ENCODE measurements at regions of chr18 and their contacts with region 1.

Region 1: GRCh38 chr18:12038639-12039417 is 54.8 kb upstream of the ANKRD62 start:
- DNase-seq: peak; percentile 85
- ATAC-seq: peak; percentile 78
- H3K4me3 Mint-ChIP-seq: peak overlapping the region; percentile 43
- H3K27ac Mint-ChIP-seq: no peak overlapping the region
- H3K4me1 Mint-ChIP-seq: peaks cover 12% of the 10 kb centered on the region
- H3K27me3 Mint-ChIP-seq: peaks cover 14% of the 10 kb centered on the region

Region 2: GRCh38 chr18:11733031-11733430 is 305.8 kb before region 1 on chr18:
- CTCF ChIA-PET with region 1: interaction called, 10 read pairs
- POLR2A ChIA-PET with region 1: no interaction called
- intact Hi-C with region 1: loop called (anchors 1 kb)
- DNase-seq: peak; percentile 84
- ATAC-seq: peak; percentile 83
- H3K4me3 Mint-ChIP-seq: no peak overlapping the region
- H3K27ac Mint-ChIP-seq: no peak overlapping the region
- H3K4me1 Mint-ChIP-seq: no peaks in the 10 kb centered on the region
- H3K27me3 Mint-ChIP-seq: peaks cover 35% of the 10 kb centered on the region

Region 3: GRCh38 chr18:11908182-11909060 is 130.4 kb before region 1 on chr18 and contains the start of gene MPPE1:
- CTCF ChIA-PET with region 1: interaction called, 3 read pairs
- POLR2A ChIA-PET with region 1: no interaction called
- intact Hi-C with region 1: loop called in 1 of 2 experiments (anchors 2 kb)
- DNase-seq: peak; percentile 93
- ATAC-seq: peak; percentile 93
- H3K4me3 Mint-ChIP-seq: peak within 1 kb of the TSS; percentile 88
- H3K27ac Mint-ChIP-seq: peak within 1 kb of the TSS; percentile 94
- H3K4me1 Mint-ChIP-seq: peaks cover 18% of the 10 kb centered on the region
- H3K27me3 Mint-ChIP-seq: no peaks in the 10 kb centered on the region
- total RNA-seq, gene MPPE1: 22.4 to 29.6 TPM

Region 4: DNA sequence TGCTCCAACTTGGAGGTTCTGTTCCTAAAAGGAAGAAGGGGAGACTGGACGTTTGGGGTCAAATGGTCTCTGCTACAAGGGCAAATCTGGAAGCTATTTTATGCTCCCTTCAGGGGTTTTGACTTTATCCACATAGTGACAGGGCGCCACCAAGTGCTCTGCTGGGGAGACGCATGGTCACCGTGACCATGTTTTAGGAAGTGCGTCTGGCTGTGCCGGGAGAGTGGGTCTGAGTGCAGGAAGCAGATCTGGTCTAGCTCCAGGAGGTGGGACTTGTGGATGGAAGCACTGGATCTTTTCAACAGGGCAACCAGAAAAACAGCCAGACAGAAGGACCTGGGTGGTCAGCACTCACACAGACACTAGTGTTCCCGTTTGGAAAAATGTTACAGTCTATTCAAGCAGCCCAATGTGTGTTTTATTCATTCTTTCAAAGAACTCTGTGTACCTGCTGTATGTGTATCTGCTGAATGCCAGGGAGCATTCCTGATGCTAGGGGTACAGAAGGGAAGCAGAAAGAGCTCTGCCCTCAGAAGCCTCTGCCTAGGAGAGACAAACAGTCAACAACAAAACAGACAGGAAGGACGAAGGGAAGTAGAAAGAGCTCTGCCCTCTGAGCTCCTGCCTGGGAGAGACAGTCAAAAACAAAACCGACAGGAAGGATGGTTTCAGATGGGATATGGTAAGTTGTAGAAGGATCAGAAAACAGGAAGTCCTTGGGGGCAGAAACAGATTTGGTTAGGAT is 43.2 kb before region 1 on chr18:
- CTCF ChIA-PET with region 1: interaction called, 5 read pairs
- POLR2A ChIA-PET with region 1: no interaction called
- intact Hi-C with region 1: loop called in 1 of 2 experiments (anchors 2 kb)
- DNase-seq: peak; percentile 75
- ATAC-seq: peak; percentile 97
- H3K4me3 Mint-ChIP-seq: no peak overlapping the region
- H3K27ac Mint-ChIP-seq: no peak overlapping the region
- H3K4me1 Mint-ChIP-seq: peaks cover 7% of the 10 kb centered on the region
- H3K27me3 Mint-ChIP-seq: no peaks in the 10 kb centered on the region

Region 5: GRCh38 chr18:12005538-12006487 is 33.0 kb before region 1 on chr18:
- CTCF ChIA-PET with region 1: interaction called, 3 read pairs
- POLR2A ChIA-PET with region 1: interaction called, 10 read pairs
- intact Hi-C with region 1: no loop called
- DNase-seq: no peak
- ATAC-seq: peak; percentile 44
- H3K4me3 Mint-ChIP-seq: no peak overlapping the region
- H3K27ac Mint-ChIP-seq: no peak overlapping the region
- H3K4me1 Mint-ChIP-seq: no peaks in the 10 kb centered on the region
- H3K27me3 Mint-ChIP-seq: no peaks in the 10 kb centered on the region

Region 6: DNA sequence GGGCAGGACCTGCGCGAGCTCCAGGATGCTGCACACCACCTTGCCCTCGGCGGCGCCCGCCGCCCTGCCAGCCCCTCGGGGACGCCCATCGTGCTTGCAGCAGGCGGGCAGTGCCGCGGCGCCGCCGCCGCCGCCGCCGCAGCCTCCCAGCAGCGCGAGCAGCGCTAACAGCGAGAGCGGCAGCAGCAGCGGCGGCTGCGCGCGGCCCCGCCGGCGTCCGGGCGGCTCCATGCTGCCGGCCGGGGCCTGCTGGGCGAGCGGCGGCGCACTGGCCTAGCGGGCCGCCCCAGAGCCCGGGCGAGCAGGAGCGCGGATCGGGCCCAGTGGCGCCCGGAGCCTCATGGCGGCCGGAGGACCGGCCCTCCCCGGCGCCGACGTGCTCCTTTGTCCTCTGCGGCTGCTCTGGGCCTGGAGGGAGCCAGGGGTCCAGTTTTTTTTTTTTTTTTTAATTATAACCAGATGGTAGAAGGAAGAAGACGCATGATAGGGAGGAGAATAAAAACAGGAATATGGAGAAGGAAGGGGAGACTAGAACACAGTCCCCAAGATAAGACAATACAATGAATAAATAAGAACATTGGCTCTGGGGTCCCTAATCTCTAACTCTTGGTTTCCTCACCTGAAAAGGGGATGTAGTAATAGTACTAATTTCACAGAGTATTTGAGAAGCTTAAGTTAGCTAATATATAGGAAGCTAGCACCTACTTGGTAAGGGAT is 37.8 kb after region 1 on chr18:
- CTCF ChIA-PET with region 1: no interaction called
- POLR2A ChIA-PET with region 1: no interaction called
- intact Hi-C with region 1: no loop called
- DNase-seq: peak; percentile 21
- ATAC-seq: peak; percentile 49
- H3K4me3 Mint-ChIP-seq: no peak overlapping the region
- H3K27ac Mint-ChIP-seq: no peak overlapping the region
- H3K4me1 Mint-ChIP-seq: no peaks in the 10 kb centered on the region
- H3K27me3 Mint-ChIP-seq: peaks cover 26% of the 10 kb centered on the region

Measured in activated CD4-positive, alpha-beta T cell treated with anti-CD3 and anti-CD28 coated beads for 36 hours (primary cell).